IMR-90 (cell line): ENCODE measurements at regions of chr14 and their contacts with region 1.

Region 1: GRCh38 chr14:73242357-73242901 is 5.1 kb downstream of the PAPLN start:
- DNase-seq: no peak
- ATAC-seq: no peak
- H3K4me3 ChIP-seq: no peak overlapping the region
- H3K27ac ChIP-seq: peak overlapping the region; percentile 9; the same call in 1 of the 2 replicates
- H3K4me1 ChIP-seq: peaks cover 18% of the 10 kb centered on the region
- H3K27me3 ChIP-seq: peaks cover 28% of the 10 kb centered on the region
- CTCF ChIP-seq: no peak
- POLR2A ChIP-seq: no peak
- RAD21 ChIP-seq: no peak

Region 2: GRCh38 chr14:73116079-73116665 is 126.3 kb before region 1 on chr14:
- CTCF ChIA-PET with region 1: no interaction called
- POLR2A ChIA-PET with region 1: no interaction called
- dilution Hi-C with region 1: no loop called
- in situ Hi-C with region 1: no loop called
- intact Hi-C with region 1: no loop called
- DNase-seq: no peak
- ATAC-seq: no peak
- H3K4me3 ChIP-seq: no peak overlapping the region
- H3K27ac ChIP-seq: no peak overlapping the region
- H3K4me1 ChIP-seq: no peaks in the 10 kb centered on the region
- H3K27me3 ChIP-seq: no peaks in the 10 kb centered on the region
- CTCF ChIP-seq: no peak
- POLR2A ChIP-seq: no peak
- RAD21 ChIP-seq: no peak

Region 3: GRCh38 chr14:73223049-73223448 is 19.4 kb before region 1 on chr14:
- CTCF ChIA-PET with region 1: no interaction called
- POLR2A ChIA-PET with region 1: no interaction called
- dilution Hi-C with region 1: no loop called
- in situ Hi-C with region 1: no loop called
- intact Hi-C with region 1: no loop called
- DNase-seq: no peak
- ATAC-seq: no peak; the same call in 1 of the 2 replicates
- H3K4me3 ChIP-seq: no peak overlapping the region
- H3K27ac ChIP-seq: no peak overlapping the region
- H3K4me1 ChIP-seq: peaks cover 14% of the 10 kb centered on the region
- H3K27me3 ChIP-seq: no peaks in the 10 kb centered on the region
- CTCF ChIP-seq: no peak
- POLR2A ChIP-seq: no peak
- RAD21 ChIP-seq: no peak

Region 4: GRCh38 chr14:73255693-73256225 is 13.3 kb after region 1 on chr14:
- CTCF ChIA-PET with region 1: no interaction called
- POLR2A ChIA-PET with region 1: interaction called, 16 read pairs
- dilution Hi-C with region 1: no loop called
- in situ Hi-C with region 1: no loop called
- intact Hi-C with region 1: no loop called
- DNase-seq: no peak
- ATAC-seq: no peak
- H3K4me3 ChIP-seq: no peak overlapping the region
- H3K27ac ChIP-seq: no peak overlapping the region
- H3K4me1 ChIP-seq: no peaks in the 10 kb centered on the region
- H3K27me3 ChIP-seq: no peaks in the 10 kb centered on the region; the same call in 1 of the 2 replicates
- CTCF ChIP-seq: no peak
- POLR2A ChIP-seq: no peak
- RAD21 ChIP-seq: no peak

Region 5: GRCh38 chr14:73295198-73295796 is 52.9 kb after region 1 on chr14:
- CTCF ChIA-PET with region 1: no interaction called
- POLR2A ChIA-PET with region 1: no interaction called
- dilution Hi-C with region 1: no loop called
- in situ Hi-C with region 1: no loop called
- intact Hi-C with region 1: no loop called
- DNase-seq: peak; percentile 31
- ATAC-seq: no peak
- H3K4me3 ChIP-seq: no peak overlapping the region
- H3K27ac ChIP-seq: no peak overlapping the region
- H3K4me1 ChIP-seq: no peaks in the 10 kb centered on the region
- H3K27me3 ChIP-seq: no peaks in the 10 kb centered on the region
- CTCF ChIP-seq: peak; percentile 69
- POLR2A ChIP-seq: no peak
- RAD21 ChIP-seq: peak; percentile 55